ENCODE measurements at regions of chr20 and their contacts with region 1.

Region 1: GRCh38 chr20:45545754-45546453 is 1.3 kb downstream of the EPPIN start:
- DNase-seq: no peak
- ATAC-seq: peak; percentile 80

Region 2: GRCh38 chr20:45765980-45766379 is 220.1 kb after region 1 on chr20:
- intact Hi-C with region 1: loop called (anchors 5 kb)
- DNase-seq: no peak
- ATAC-seq: no peak

Region 3: DNA sequence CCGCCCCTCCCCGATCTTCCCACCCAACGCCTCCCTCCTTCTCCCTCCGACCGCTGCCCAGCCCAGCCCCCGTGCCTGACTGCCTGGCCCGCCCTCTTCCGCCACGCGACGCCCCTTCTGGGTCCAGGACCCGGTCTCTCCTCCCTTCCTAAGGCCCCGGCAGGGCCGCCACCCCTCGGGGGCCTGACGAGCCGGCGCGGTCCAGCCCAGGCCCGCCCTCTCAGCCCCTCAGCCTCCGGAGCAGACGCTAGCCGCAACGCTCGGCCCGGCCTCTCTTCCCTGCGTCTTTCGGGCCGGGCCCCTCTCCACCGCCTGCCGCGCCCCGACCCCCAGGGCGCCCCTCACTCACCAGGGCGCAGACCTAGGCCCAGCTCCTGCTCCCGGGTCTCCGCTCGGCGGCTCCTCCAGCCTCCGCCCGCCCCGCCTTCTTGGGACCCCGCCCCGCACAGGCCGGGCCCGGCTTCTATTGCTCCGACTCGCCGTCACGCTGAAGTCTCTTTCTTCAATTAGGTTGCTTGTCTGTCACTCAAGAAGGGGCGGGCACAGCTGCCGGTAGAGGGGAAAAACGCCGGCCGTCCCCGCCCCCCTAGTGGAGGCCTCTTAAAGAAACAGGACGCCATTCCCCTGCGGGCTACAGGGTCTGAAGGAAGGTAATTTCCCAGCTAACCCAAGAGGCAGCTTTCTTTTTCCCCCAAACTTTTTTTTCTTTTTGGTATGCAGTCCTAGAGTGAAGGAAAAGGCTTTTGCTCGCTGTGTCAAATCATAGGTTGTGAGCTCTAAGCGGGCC is 860.5 kb after region 1 on chr20 and contains the start of gene ELMO2:
- intact Hi-C with region 1: no loop called
- DNase-seq: peak; percentile 98
- ATAC-seq: peak; percentile 94
- total RNA-seq, gene ELMO2: 84.9 TPM

Measured in sciatic nerve (tissue), 2 donors.